ENCODE measurements at regions of chr16 and their contacts with region 1.

Region 1: GRCh38 chr16:88686439-88687253 is at the start of gene SNAI3:
- DNase-seq: peak; percentile 91
- ATAC-seq: peak; percentile 90
- H3K4me3 Mint-ChIP-seq: peak within 1 kb of the TSS; percentile 78
- H3K27ac Mint-ChIP-seq: peak within 1 kb of the TSS; percentile 59
- H3K4me1 Mint-ChIP-seq: peaks cover 46% of the 10 kb centered on the region
- H3K27me3 Mint-ChIP-seq: peaks cover 4% of the 10 kb centered on the region
- total RNA-seq, gene SNAI3: 5.6 to 14.1 TPM

Region 2: GRCh38 chr16:88665148-88665547 is 21.5 kb before region 1 on chr16:
- CTCF ChIA-PET with region 1: interaction called, 16 read pairs
- DNase-seq: no peak
- ATAC-seq: no peak
- H3K4me3 Mint-ChIP-seq: peak overlapping the region; percentile 14
- H3K27ac Mint-ChIP-seq: no peak overlapping the region
- H3K4me1 Mint-ChIP-seq: peaks cover 20% of the 10 kb centered on the region
- H3K27me3 Mint-ChIP-seq: no peaks in the 10 kb centered on the region

Region 3: DNA sequence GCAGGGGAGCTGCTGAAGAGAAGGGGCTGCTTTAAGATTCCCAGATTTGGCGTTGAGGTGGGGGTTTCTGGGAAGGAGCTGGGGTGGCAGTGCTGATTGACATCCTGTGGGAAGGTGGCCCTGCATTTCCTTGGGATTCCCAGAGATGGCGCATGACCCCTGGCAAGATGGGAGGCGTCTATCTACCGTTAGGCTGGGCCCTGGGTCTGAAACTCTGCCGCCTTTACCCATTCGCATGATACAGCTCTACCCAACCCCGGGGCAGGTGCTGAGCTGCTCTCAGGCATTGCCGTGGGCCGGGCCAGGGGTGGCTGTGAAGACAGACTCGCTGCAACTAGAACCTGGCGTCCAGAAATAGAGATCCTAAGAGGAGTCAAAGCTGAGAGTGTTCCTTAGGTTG is 13.9 kb before region 1 on chr16:
- CTCF ChIA-PET with region 1: interaction called, 16 read pairs
- DNase-seq: no peak
- ATAC-seq: no peak
- H3K4me3 Mint-ChIP-seq: no peak overlapping the region
- H3K27ac Mint-ChIP-seq: no peak overlapping the region
- H3K4me1 Mint-ChIP-seq: no peaks in the 10 kb centered on the region
- H3K27me3 Mint-ChIP-seq: no peaks in the 10 kb centered on the region

Region 4: DNA sequence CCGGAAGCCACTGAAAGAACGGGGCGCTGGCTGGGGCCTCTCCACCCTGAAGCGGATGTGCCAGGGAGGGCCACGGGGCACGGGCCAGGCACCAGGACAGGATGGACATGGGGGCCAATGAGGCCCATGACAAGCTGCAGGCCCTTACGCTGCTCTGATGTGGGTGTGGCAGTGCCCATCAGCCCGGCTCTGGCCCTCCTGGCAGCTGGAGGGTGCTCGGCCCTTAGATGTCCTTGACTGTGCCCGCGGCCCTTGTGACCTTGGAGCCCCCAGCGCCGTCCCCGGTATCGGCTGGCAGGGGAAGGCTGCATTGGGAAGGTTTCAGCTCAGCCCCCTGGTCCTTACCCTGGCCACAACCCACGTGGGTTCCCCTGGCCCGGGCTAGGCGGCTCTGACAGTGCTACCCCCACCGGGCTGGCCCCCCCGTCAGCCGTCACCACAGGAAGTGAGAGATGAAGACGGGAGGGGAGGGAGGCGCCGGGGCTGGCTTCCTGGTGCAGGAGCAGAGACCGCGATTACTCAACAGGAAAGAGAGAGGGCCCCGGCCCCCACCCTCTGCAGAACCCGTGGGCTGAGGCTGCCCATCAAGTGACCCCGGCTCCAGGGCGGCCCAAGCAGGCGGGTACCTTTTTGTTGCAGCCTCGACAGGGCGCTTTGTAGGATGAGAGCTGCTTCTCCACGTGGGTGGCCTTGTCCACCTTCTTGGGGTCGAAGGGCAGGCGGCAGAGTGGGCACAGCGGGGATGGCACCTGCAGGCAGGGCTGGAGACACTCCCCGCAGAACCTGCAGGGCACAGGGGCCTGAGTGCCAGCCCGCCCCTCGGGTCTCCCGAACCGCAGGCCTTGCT is 14.2 kb after region 1 on chr16:
- CTCF ChIA-PET with region 1: interaction called, 58 read pairs
- DNase-seq: peak; percentile 99
- ATAC-seq: peak; percentile 75
- H3K4me3 Mint-ChIP-seq: peak overlapping the region; percentile 89
- H3K27ac Mint-ChIP-seq: peak overlapping the region; percentile 98
- H3K4me1 Mint-ChIP-seq: peaks cover 61% of the 10 kb centered on the region
- H3K27me3 Mint-ChIP-seq: no peaks in the 10 kb centered on the region

Measured in activated CD8-positive, alpha-beta memory T cell treated with anti-CD3 and anti-CD28 coated beads, Interleukin-2, amount 10 ng/mL, durations not matched to agents 7 days and 5 days (primary cell).